ENCODE measurements at regions of chr15 and their contacts with region 1.

Region 1: GRCh38 chr15:76235186-76235826 is 76.0 kb downstream of the ETFA start:
- DNase-seq: no peak
- ATAC-seq: peak; percentile 86
- H3K4me3 ChIP-seq: no peak overlapping the region
- H3K27ac ChIP-seq: no peak overlapping the region
- H3K4me1 ChIP-seq: no peaks in the 10 kb centered on the region
- H3K27me3 ChIP-seq: no peaks in the 10 kb centered on the region
- CTCF ChIP-seq: peak in 2 of 3 experiments; percentile 51 to 57; a peak in 3 of 6 replicates
- EP300 ChIP-seq: no peak
- POLR2A ChIP-seq: no peak
- RAD21 ChIP-seq: peak; percentile 67

Region 2: DNA sequence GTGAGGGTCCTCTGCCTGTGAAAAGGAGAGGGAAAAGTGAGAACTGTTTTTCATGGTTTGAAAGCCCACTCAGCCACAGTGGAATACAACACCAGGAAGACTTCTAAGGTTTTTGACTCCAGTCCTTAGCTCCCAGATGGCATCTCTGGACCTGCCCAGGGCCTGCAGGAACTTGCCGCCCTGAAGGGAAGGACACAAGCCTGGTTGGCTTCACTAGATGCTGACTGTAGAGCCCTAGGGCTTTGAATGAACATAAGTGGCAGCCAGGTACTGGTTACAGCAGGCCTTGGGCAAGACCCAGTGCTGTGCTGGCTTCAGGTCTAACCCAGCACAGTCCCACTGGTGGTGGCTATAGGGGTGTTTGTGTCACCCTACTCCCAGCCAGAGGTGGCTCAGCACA is 196.8 kb before region 1 on chr15:
- CTCF ChIA-PET with region 1: no interaction called
- POLR2A ChIA-PET with region 1: no interaction called
- RAD21 ChIA-PET with region 1: no interaction called
- SMC1A ChIA-PET with region 1: no interaction called
- in situ Hi-C with region 1: no loop called
- intact Hi-C with region 1: no loop called
- DNase-seq: no peak
- ATAC-seq: no peak
- H3K4me3 ChIP-seq: no peak overlapping the region
- H3K27ac ChIP-seq: no peak overlapping the region
- H3K4me1 ChIP-seq: no peaks in the 10 kb centered on the region
- H3K27me3 ChIP-seq: no peaks in the 10 kb centered on the region
- CTCF ChIP-seq: no peak
- EP300 ChIP-seq: no peak
- POLR2A ChIP-seq: no peak
- RAD21 ChIP-seq: no peak

Region 3: GRCh38 chr15:76169013-76169412 is 66.3 kb before region 1 on chr15:
- CTCF ChIA-PET with region 1: no interaction called
- POLR2A ChIA-PET with region 1: no interaction called
- RAD21 ChIA-PET with region 1: no interaction called
- SMC1A ChIA-PET with region 1: no interaction called
- in situ Hi-C with region 1: no loop called
- intact Hi-C with region 1: no loop called
- DNase-seq: no peak
- ATAC-seq: peak; percentile 87
- H3K4me3 ChIP-seq: no peak overlapping the region
- H3K27ac ChIP-seq: no peak overlapping the region
- H3K4me1 ChIP-seq: no peaks in the 10 kb centered on the region
- H3K27me3 ChIP-seq: no peaks in the 10 kb centered on the region; a peak in 2 of 4 replicates
- CTCF ChIP-seq: no peak
- EP300 ChIP-seq: no peak
- POLR2A ChIP-seq: no peak
- RAD21 ChIP-seq: no peak

Region 4: DNA sequence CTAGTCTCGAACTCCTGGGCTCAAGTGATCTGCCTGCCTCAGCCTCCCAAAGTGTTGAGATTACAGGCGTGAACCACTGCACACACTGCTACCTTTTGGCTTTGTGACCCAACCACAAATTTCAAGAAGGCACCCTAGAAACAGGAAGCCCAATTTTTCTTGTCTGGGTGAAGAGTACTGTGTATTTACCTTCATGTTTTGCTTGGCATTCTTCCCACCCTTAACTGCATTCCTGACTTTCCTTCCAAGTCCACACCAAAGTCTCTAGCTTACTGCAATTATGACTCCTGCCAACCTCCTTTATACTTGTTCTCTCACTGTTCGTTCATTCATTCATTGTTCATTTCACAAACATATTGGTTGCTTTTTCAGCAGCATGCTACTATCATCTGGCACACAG is 18.3 kb before region 1 on chr15:
- CTCF ChIA-PET with region 1: interaction called, 12 read pairs
- POLR2A ChIA-PET with region 1: no interaction called
- RAD21 ChIA-PET with region 1: no interaction called
- SMC1A ChIA-PET with region 1: interaction called, 4 read pairs
- in situ Hi-C with region 1: no loop called
- intact Hi-C with region 1: no loop called
- DNase-seq: no peak
- ATAC-seq: no peak
- H3K4me3 ChIP-seq: no peak overlapping the region
- H3K27ac ChIP-seq: no peak overlapping the region
- H3K4me1 ChIP-seq: peaks cover 7% of the 10 kb centered on the region; the same call in 1 of the 2 replicates
- H3K27me3 ChIP-seq: no peaks in the 10 kb centered on the region
- CTCF ChIP-seq: no peak
- EP300 ChIP-seq: no peak
- POLR2A ChIP-seq: no peak
- RAD21 ChIP-seq: no peak

Region 5: DNA sequence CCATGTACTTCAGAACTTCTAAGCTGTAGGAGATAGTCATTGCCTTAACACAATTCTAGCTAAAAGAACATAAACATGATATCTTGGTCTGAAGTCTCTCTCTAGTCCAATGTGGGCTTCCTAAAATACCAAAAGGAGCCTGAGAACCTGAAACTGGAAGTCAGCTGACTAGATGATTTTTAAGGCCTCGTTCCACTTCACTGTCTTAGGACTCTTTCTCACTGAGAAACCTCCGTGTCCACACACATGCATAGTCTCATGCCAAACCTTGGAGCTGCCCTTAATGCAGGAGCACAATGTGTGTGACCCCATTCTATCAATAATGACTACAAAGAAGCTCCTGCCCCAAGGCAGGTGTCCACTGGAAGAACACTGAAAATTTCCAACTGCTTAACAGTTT is 11.8 kb before region 1 on chr15:
- CTCF ChIA-PET with region 1: interaction called, 12 read pairs
- POLR2A ChIA-PET with region 1: no interaction called
- RAD21 ChIA-PET with region 1: interaction called, 3 read pairs
- SMC1A ChIA-PET with region 1: interaction called, 6 read pairs
- in situ Hi-C with region 1: no loop called
- intact Hi-C with region 1: no loop called
- DNase-seq: peak; percentile 64
- ATAC-seq: peak; percentile 78
- H3K4me3 ChIP-seq: no peak overlapping the region
- H3K27ac ChIP-seq: peak overlapping the region; percentile 79
- H3K4me1 ChIP-seq: peaks cover 12% of the 10 kb centered on the region
- H3K27me3 ChIP-seq: no peaks in the 10 kb centered on the region
- CTCF ChIP-seq: no peak
- EP300 ChIP-seq: no peak
- POLR2A ChIP-seq: no peak
- RAD21 ChIP-seq: no peak

Region 6: GRCh38 chr15:76330080-76330680 is 94.9 kb after region 1 on chr15:
- CTCF ChIA-PET with region 1: interaction called, 21 read pairs
- POLR2A ChIA-PET with region 1: no interaction called
- RAD21 ChIA-PET with region 1: interaction called, 3 read pairs
- SMC1A ChIA-PET with region 1: interaction called, 5 read pairs
- in situ Hi-C with region 1: no loop called
- intact Hi-C with region 1: loop called (anchors 5 kb)
- DNase-seq: no peak
- ATAC-seq: no peak
- H3K4me3 ChIP-seq: no peak overlapping the region
- H3K27ac ChIP-seq: no peak overlapping the region
- H3K4me1 ChIP-seq: no peaks in the 10 kb centered on the region; the same call in 1 of the 2 replicates
- H3K27me3 ChIP-seq: peaks cover 0 to 5% of the 10 kb centered on the region in 2 experiments; a peak in 2 of 4 replicates
- CTCF ChIP-seq: peak in 2 of 3 experiments; percentile 41 to 47; a peak in 3 of 6 replicates
- EP300 ChIP-seq: no peak
- POLR2A ChIP-seq: no peak
- RAD21 ChIP-seq: peak; percentile 29; the same call in 1 of the 2 replicates

Region 7: DNA sequence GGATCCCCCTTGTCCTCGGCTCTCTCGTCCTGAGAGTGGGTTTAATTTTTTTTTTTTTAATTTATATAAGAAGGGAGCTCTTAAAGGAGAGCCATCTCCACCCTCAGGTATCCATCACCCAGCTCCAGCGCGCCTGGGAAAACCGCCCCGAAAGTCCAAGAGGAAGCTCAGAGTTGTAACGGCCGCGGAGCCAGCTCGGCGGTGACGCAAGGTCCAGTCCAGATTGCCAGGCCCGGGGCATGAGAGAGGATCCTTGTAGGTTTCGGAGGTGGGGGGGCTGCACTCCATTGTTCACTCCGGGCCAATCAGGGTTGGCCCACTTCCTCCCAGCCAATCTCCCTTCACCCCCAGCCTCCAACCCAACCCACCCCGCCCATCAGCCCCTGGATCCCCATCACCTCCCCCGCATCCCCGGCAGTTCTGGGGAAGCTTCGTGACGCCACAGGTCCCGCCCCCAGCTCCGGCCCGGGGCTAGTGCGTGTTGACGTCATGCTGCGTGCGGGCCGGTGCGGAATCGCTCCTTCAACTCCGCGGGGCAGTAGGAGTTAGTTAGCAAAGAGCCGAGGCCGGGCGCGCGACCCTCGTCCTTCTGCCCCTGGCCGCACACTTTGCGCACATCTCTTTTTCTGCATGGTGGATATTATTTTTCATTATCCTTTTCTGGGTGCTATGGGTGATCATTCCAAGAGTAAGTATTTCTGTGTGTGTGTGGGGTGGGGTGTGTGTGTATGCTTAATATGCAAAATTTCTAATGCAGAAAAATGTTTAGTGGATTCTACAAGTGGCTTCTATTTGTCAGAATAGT is 101.2 kb after region 1 on chr15 and contains the start of gene ISL2:
- CTCF ChIA-PET with region 1: interaction called, 21 read pairs
- POLR2A ChIA-PET with region 1: no interaction called
- RAD21 ChIA-PET with region 1: interaction called, 3 read pairs
- SMC1A ChIA-PET with region 1: interaction called, 5 read pairs
- in situ Hi-C with region 1: no loop called
- intact Hi-C with region 1: loop called (anchors 5 kb)
- DNase-seq: peak; percentile 61
- ATAC-seq: peak; percentile 30
- H3K4me3 ChIP-seq: peak within 1 kb of the TSS; percentile 62
- H3K27ac ChIP-seq: peak within 1 kb of the TSS; percentile 51
- H3K4me1 ChIP-seq: peaks cover 25% of the 10 kb centered on the region
- H3K27me3 ChIP-seq: peaks cover 11 to 22% of the 10 kb centered on the region in 2 experiments
- CTCF ChIP-seq: no peak
- EP300 ChIP-seq: no peak
- POLR2A ChIP-seq: peak; percentile 88
- RAD21 ChIP-seq: no peak
- polyA plus RNA-seq, gene ISL2: not detected

Region 8: DNA sequence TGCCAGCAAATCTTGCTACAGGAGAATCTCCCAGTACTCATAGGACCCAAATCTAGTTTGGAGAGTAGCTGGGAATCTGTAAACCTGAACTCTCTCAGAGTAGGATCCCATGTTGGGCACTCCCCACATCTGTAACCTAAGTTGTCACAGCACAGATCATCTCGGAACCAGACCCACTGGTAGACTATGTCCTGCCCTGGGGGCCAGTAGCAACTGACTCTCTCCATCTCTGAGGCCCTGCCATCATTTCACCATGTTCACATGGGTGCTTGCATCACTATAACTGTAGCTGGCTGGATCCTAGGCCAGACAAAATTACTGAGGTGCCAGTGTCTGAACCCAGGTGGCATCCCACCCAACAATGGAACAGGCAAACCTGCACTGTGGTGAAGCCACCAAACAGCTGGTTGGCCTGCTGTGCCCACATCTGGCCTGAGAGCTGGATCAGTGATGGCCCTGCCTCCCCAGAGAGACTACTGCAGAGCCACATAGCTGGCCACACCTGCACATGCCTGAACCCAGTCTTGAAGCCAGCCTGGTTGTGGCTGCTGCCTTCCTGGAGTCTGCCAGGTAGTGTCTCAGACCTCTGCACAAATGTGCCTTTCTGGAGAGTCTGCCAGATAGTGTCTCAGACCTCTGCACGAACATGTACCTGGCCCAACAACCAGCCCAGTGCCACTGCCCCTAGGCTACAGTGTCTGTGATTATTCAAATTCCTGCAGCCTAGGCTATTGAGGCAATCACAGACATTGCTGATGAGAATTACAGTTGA is 183.2 kb after region 1 on chr15:
- CTCF ChIA-PET with region 1: no interaction called
- POLR2A ChIA-PET with region 1: no interaction called
- RAD21 ChIA-PET with region 1: no interaction called
- SMC1A ChIA-PET with region 1: no interaction called
- in situ Hi-C with region 1: no loop called
- intact Hi-C with region 1: no loop called
- DNase-seq: no peak
- ATAC-seq: no peak
- H3K4me3 ChIP-seq: no peak overlapping the region
- H3K27ac ChIP-seq: no peak overlapping the region
- H3K4me1 ChIP-seq: no peaks in the 10 kb centered on the region
- H3K27me3 ChIP-seq: no peaks in the 10 kb centered on the region
- CTCF ChIP-seq: no peak
- EP300 ChIP-seq: no peak
- POLR2A ChIP-seq: no peak
- RAD21 ChIP-seq: no peak

Region 9: DNA sequence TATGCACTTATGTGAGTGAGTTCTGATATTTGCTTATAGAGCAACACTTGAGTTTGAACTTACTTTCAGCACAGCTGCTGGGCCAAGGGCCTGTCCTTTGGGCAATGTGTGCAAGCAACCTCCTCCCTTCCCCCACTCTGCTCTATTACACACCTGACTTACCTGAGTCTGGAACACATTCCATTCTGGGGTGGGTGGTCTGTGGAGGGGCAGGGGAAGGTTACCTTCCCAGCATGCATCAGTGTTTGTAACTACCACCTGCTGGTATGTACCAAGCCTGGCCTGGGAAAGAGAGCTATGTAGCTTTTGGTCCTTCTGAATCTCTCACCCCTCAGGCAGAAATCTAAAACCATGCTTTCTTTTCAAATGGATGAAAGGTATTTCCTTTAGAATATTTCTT is 204.2 kb after region 1 on chr15:
- CTCF ChIA-PET with region 1: no interaction called
- POLR2A ChIA-PET with region 1: no interaction called
- RAD21 ChIA-PET with region 1: no interaction called
- SMC1A ChIA-PET with region 1: no interaction called
- in situ Hi-C with region 1: no loop called
- intact Hi-C with region 1: no loop called
- DNase-seq: no peak
- ATAC-seq: no peak
- H3K4me3 ChIP-seq: no peak overlapping the region
- H3K27ac ChIP-seq: no peak overlapping the region
- H3K4me1 ChIP-seq: no peaks in the 10 kb centered on the region
- H3K27me3 ChIP-seq: no peaks in the 10 kb centered on the region
- CTCF ChIP-seq: no peak
- EP300 ChIP-seq: no peak
- POLR2A ChIP-seq: no peak
- RAD21 ChIP-seq: no peak

Region 10: DNA sequence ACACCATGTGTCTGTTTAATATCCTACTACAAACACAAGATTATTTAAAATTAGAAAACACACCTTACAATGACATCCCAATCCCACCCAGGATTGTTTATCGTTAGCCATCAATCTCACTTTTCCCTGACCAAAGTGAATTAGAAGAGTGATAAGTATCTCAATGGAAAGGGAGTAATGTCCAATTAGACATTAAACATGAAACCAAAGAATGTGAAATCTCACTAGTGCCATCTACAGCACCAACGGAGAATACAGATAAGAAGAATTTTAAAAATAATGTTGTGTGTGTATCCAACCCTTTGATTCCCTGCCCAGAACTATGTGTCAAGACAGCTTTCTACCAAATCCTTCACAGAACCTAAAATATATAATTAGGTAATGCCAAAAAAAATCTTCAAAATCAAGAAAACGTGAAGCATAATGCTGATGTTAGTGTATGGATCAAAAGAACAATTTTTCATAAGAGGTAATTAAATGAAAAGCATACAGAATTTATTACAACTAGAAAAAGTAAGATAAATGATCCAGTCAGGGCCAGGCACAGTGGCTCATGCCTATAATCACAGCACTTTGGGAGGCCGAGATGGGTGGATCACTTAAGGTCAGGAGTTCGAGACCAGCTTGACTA is 605.6 kb after region 1 on chr15:
- CTCF ChIA-PET with region 1: interaction called, 6 read pairs
- POLR2A ChIA-PET with region 1: no interaction called
- RAD21 ChIA-PET with region 1: no interaction called
- SMC1A ChIA-PET with region 1: no interaction called
- in situ Hi-C with region 1: no loop called
- intact Hi-C with region 1: loop called (anchors 5 kb)
- DNase-seq: no peak
- ATAC-seq: peak; percentile 72
- H3K4me3 ChIP-seq: no peak overlapping the region
- H3K27ac ChIP-seq: no peak overlapping the region
- H3K4me1 ChIP-seq: peaks cover 10% of the 10 kb centered on the region; the same call in 1 of the 2 replicates
- H3K27me3 ChIP-seq: no peaks in the 10 kb centered on the region
- CTCF ChIP-seq: peak; percentile 48 to 57 (median 49); a peak in 4 of 6 replicates
- EP300 ChIP-seq: no peak
- POLR2A ChIP-seq: no peak
- RAD21 ChIP-seq: peak; percentile 70

Region 11: GRCh38 chr15:76866716-76867321 is 631.5 kb after region 1 on chr15:
- CTCF ChIA-PET with region 1: interaction called, 4 read pairs
- POLR2A ChIA-PET with region 1: no interaction called
- RAD21 ChIA-PET with region 1: interaction called, 4 read pairs
- SMC1A ChIA-PET with region 1: interaction called, 4 read pairs
- in situ Hi-C with region 1: no loop called
- intact Hi-C with region 1: loop called (anchors 1 kb)
- DNase-seq: no peak
- ATAC-seq: peak; percentile 53; the same call in 2 of the 3 replicates
- H3K4me3 ChIP-seq: no peak overlapping the region
- H3K27ac ChIP-seq: no peak overlapping the region
- H3K4me1 ChIP-seq: peaks cover 5% of the 10 kb centered on the region; the same call in 1 of the 2 replicates
- H3K27me3 ChIP-seq: no peaks in the 10 kb centered on the region
- CTCF ChIP-seq: peak; percentile 43 to 51 (median 47); a peak in 5 of 6 replicates
- EP300 ChIP-seq: no peak
- POLR2A ChIP-seq: no peak
- RAD21 ChIP-seq: peak; percentile 82